ENCODE measurements at regions of chrX and their contacts with region 1.

Region 1: GRCh38 chrX:53294024-53294648 is 12.8 kb upstream of the IQSEC2 start:
- DNase-seq: no peak
- H3K4me3 ChIP-seq: no peak overlapping the region
- H3K27ac ChIP-seq: no peak overlapping the region
- H3K4me1 ChIP-seq: no peaks in the 10 kb centered on the region
- H3K27me3 ChIP-seq: peaks cover 0 to 47% of the 10 kb centered on the region in 2 donors
- CTCF ChIP-seq: no peak
- POLR2A ChIP-seq: no peak

Region 2: DNA sequence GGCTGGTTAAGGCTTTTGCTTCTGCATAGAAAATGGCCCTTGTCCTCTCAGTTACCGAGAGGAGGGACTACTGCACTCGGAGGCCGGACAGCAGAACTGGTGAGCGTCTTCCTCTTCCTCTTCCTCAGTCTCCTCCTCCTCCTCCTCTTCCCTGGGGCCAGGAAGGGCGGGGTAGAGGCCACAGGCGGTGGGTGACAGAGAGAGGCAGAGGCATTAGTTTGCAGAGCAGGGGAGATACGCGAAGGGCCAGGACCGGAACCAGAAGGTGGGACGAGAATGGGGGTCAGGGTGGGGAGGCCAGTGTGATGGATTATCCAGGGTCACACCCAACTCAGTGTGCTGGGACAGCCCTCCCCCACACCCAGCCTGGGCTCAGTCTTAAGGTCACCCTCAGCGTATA is 27.2 kb before region 1 on chrX:
- intact Hi-C with region 1: loop called (anchors 1 kb)
- DNase-seq: no peak
- H3K4me3 ChIP-seq: no peak overlapping the region
- H3K27ac ChIP-seq: peak overlapping the region in 1 of 2 donors; percentile 32
- H3K4me1 ChIP-seq: no peaks in the 10 kb centered on the region
- H3K27me3 ChIP-seq: peaks cover 0 to 67% of the 10 kb centered on the region in 2 donors
- CTCF ChIP-seq: no peak
- POLR2A ChIP-seq: no peak

Region 3: DNA sequence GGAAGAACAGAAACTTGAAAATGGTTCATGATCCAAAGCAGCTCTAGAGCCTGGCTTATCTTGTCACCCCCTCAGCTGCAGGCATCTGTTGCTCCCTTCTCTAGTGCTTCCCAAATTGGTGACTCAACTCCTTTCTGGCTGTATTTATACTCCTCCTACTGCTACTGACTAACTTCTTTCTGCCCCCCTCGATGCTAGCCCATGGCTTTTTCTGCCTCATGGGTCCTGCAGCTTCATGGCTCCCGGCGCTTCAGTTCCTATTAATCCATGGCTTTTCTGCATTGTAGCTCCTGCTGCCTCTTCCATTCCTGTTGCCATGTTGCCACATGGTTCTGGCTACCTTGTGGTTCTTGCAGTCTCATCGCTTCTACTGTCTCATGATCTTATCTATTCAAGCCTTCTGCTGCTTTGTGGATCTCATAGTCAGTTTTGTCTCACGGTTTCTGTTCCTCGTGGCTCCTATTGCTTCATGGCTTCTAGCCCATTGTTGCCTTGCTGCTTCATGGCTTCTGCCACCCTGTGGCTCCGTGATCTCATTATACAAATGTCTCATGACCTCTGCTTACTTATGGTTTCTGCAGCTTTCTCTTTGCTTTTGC is 80.2 kb after region 1 on chrX:
- intact Hi-C with region 1: no loop called
- DNase-seq: no peak
- H3K4me3 ChIP-seq: no peak overlapping the region
- H3K27ac ChIP-seq: no peak overlapping the region
- H3K4me1 ChIP-seq: no peaks in the 10 kb centered on the region
- H3K27me3 ChIP-seq: no peaks in the 10 kb centered on the region
- CTCF ChIP-seq: no peak
- POLR2A ChIP-seq: no peak